Ascending aorta (tissue), 2 donors: ENCODE measurements at regions of chr7 and their contacts with region 1.

Region 1: DNA sequence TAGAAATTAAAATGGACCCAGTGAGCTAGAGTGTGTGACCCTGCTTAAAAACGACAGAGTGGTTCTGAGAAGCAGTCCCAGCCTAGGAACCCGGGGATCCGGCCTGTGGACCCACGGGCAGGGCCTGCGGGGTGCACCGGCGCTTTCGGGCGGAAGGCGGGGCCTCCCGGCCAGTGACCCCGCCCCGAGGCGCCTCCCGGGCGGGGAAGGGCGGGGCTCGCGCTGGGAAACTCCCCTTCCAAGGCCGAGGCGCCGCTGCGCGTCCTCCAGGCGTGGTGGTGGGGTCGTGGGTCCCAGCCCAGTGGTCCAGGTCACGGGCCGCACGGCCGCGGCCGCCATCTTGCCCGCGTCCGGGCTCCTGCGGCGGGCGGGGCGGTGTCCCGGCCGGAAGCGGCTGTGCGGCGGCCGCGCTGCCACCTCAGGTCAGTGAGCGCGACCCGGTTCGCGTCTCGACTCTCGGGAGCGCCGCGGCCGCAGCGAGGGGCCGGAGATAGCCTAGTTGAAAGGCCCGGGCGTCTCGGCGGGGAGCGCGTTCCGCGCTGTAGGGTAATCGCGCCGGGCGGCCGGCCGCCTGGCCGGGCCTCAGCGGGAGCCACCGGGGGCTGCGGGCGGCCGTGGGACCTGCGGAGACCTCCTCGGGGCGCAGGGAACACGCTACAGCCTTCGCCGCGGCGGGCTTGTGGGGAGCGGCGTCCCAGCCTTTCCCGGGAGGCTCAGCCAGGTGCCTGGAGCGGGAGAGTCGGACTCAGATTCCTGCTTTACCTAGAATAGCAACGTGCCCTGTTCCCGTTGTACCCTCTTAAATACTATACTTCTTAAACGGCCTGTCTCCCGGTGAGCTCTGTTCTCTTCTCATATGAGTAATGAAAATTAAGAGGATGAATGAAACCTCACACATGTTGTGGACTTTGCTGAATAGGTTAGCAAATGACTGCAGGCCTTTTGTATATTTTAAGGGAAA is at the start of gene MIOS:
- DNase-seq: peak; percentile 10 to 90
- H3K4me3 ChIP-seq: peak within 1 kb of the TSS; percentile 85 to 93
- H3K27ac ChIP-seq: peak within 1 kb of the TSS; percentile 94 to 95
- H3K4me1 ChIP-seq: peaks cover 5 to 12% of the 10 kb centered on the region in 2 donors
- H3K27me3 ChIP-seq: no peaks in the 10 kb centered on the region
- CTCF ChIP-seq: no peak
- total RNA-seq, gene MIOS: 14.6 TPM

Region 2: DNA sequence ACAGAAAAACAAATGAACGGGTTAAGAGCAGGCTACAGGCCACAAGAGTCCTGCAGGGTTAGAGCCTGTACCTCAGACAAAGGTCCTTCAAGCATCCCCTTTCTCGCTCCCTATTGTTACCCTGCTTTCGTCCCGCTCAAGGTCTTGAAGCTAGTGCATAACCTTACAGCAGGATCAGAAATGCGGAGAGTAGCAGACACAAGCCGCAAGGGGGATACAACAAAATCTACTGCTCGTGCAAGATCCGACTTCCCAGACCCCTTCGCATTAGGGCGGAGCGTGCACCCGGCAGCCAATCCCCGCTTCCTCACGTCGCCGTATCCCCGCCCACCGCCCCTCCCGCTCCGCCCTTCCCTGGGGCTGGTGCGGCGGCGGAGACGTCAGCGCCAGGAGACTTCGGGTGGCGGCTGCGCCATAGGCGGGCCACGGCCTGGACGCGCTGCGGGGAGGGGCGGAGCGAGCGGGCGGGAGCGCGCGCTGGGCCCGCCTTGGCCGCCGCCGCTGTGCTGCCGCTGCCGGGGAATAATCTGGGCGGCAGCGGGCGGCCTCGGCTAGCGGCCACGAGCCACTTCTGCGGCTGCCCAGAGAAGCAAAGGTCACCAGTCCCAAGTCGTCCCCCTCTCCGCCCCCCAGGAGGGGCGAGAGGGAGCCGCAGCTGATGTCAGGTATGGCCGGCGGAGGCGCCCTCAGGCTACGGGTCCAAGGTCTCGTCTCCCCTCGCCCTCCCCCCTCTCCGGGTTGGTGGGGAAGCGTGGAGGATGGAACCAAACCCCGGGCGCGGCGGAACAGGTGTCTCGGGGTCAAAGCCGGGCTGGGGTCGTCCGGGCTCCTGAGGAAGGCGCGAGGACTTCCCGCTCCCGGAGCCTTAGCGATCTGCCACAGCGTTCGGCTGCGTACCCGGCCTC is 384.5 kb before region 1 on chr7 and contains the start of gene C1GALT1:
- intact Hi-C with region 1: loop called (anchors 1 kb)
- DNase-seq: peak; percentile 90 to 98
- H3K4me3 ChIP-seq: peak within 1 kb of the TSS; percentile 87 to 93
- H3K27ac ChIP-seq: peak within 1 kb of the TSS; percentile 89 to 94
- H3K4me1 ChIP-seq: peaks cover 0 to 7% of the 10 kb centered on the region in 2 donors
- H3K27me3 ChIP-seq: no peaks in the 10 kb centered on the region
- CTCF ChIP-seq: peak in 2 of 3 experiments; percentile 26 to 44
- total RNA-seq, gene C1GALT1: 11.0 TPM